Sigmoid colon (tissue), 7 donors: ENCODE measurements at regions of chr17 and their contacts with region 1.

Region 1: DNA sequence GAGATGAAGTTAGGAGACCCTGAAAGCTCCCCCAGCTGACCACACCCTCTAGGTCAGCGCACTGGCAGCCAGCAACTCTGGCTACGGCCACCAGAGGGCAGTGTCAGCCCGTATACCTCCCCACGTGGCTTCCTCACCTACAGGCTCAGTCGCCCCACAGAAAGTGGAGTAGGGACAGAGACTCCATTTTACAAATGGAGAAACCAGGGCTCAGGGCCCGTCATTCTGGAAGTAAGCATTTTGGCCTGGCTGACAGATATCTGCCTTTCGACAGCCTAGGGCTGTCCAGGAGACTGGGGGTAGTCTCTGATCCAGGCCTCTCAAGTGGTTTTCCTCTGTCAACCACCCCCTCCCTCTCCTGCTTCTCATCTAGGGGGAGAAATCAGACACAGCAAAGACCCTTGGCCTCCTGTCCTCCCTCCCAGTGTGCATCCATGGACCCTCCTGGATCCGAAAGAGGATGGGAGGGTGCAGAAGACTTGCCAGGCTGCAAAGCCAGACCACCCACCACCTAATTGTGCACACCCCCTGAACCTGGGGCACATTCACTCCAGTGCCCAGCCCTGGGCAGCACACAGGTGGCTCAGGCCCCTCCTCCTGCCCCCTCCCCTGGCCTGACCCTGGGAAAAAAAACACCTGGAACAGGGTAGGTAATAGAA is 3.8 kb upstream of the HAP1 start:
- DNase-seq: peak; percentile 88
- H3K4me3 ChIP-seq: no peak overlapping the region
- H3K27ac ChIP-seq: no peak overlapping the region
- H3K4me1 ChIP-seq: peaks cover 0 to 23% (median 18%) of the 10 kb centered on the region in 4 donors
- H3K27me3 ChIP-seq: peaks cover 22 to 47% (median 42%) of the 10 kb centered on the region in 3 donors
- CTCF ChIP-seq: peak; percentile 95 to 99 (median 98)
- EP300 ChIP-seq: no peak
- POLR2A ChIP-seq: no peak

Region 2: GRCh38 chr17:41655611-41656351 is 82.4 kb before region 1 on chr17:
- intact Hi-C with region 1: no loop called
- DNase-seq: no peak
- H3K4me3 ChIP-seq: no peak overlapping the region
- H3K27ac ChIP-seq: peak overlapping the region in 2 of 4 donors; percentile 47 to 69
- H3K4me1 ChIP-seq: peaks cover 0 to 9% (median 2%) of the 10 kb centered on the region in 4 donors
- H3K27me3 ChIP-seq: no peaks in the 10 kb centered on the region
- CTCF ChIP-seq: no peak
- EP300 ChIP-seq: no peak
- POLR2A ChIP-seq: no peak

Region 3: GRCh38 chr17:41801374-41802271 is 63.4 kb after region 1 on chr17:
- intact Hi-C with region 1: loop called (anchors 1 kb)
- DNase-seq: peak; percentile 91
- H3K4me3 ChIP-seq: peak overlapping the region in 1 of 4 donors; percentile 16
- H3K27ac ChIP-seq: peak overlapping the region in 2 of 4 donors; percentile 9 to 14
- H3K4me1 ChIP-seq: peaks cover 0 to 12% (median 9%) of the 10 kb centered on the region in 4 donors
- H3K27me3 ChIP-seq: no peaks in the 10 kb centered on the region
- CTCF ChIP-seq: peak; percentile 83 to 97 (median 96)
- EP300 ChIP-seq: no peak
- POLR2A ChIP-seq: no peak

Region 4: DNA sequence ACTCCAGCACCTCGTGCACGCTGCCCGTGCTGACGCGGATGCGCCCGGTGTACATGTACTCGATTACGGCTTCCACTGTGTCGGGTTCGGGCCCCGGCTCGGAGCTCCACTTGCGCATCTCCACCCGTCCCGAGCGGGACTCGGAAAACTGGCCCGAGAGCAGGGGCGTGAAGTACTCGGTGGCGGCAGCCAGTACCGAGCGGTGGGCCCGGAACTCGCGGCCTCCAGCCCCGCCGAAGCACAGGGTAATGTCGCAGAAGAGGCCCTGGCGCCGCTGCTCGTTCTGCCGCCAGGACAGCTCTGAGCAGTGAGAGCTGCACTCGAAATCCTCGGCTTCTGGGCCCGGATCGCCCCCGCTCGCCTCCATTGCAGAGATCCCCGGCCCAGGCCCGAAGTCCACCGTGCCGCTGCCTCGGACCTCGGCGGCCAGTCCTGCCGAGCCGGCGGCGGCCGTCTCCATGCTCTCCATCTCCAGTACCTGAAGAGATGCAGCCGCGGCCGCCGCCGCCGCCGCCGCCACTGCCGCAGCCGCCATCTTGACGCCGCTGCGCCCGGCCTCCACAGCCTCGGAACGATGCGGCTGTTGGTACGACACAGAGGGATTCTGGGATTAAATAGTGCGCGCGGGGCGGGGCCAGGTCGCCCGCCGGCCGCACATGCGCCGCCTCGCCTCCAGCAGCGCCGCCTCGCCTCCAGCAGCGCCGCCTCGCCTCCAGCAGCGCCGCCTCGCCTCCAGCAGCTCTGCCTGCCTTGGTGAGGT is 126.8 kb after region 1 on chr17 and contains the start of gene KLHL11:
- intact Hi-C with region 1: loop called (anchors 1 kb)
- DNase-seq: peak; percentile 94
- H3K4me3 ChIP-seq: peak within 1 kb of the TSS; percentile 82 to 98 (median 90)
- H3K27ac ChIP-seq: peak within 1 kb of the TSS; percentile 93 to 96 (median 96)
- H3K4me1 ChIP-seq: peaks cover 0 to 30% (median 26%) of the 10 kb centered on the region in 4 donors
- H3K27me3 ChIP-seq: no peaks in the 10 kb centered on the region
- CTCF ChIP-seq: no peak
- EP300 ChIP-seq: no peak
- POLR2A ChIP-seq: peak; percentile 58 to 64
- total RNA-seq, gene KLHL11: 16.1 to 21.6 (median 19.2) TPM